ENCODE measurements at regions of chr16 and their contacts with region 1.

Region 1: DNA sequence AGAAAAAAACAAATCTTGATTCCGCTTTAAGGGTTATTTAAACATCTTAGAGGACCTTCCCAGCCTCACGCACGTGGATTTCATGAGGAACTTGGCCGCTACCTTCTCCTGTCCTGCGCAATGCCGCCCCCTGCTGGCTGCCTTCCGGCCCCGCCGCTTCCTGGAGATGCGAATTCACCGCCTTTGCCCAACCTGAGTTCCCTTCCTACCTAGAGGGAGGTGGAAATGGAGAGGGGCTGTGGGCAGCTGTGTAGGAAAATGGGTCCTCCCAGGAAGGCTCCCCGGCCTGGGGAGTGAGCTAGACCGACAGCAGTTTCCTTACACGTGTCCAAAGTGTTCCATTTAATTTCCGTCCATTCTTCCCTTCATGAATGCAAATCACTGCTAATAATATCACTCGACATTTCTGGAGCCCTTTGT is 1.0 kb upstream of the ABCC12 start:
- DNase-seq: peak; percentile 93
- ATAC-seq: peak; percentile 50
- H3K4me3 Mint-ChIP-seq: no peak overlapping the region
- H3K27ac Mint-ChIP-seq: no peak overlapping the region
- H3K4me1 Mint-ChIP-seq: peaks cover 25% of the 10 kb centered on the region
- H3K27me3 Mint-ChIP-seq: peaks cover 30% of the 10 kb centered on the region

Region 2: GRCh38 chr16:47018223-47018891 is 1138.4 kb before region 1 on chr16:
- CTCF ChIA-PET with region 1: no interaction called
- POLR2A ChIA-PET with region 1: no interaction called
- intact Hi-C with region 1: loop called in 1 of 2 experiments (anchors 1 kb)
- DNase-seq: peak; percentile 76
- ATAC-seq: peak; percentile 95
- H3K4me3 Mint-ChIP-seq: no peak overlapping the region
- H3K27ac Mint-ChIP-seq: peak overlapping the region; percentile 60
- H3K4me1 Mint-ChIP-seq: peaks cover 18% of the 10 kb centered on the region
- H3K27me3 Mint-ChIP-seq: no peaks in the 10 kb centered on the region

Region 3: GRCh38 chr16:47110939-47111338 is 1045.9 kb before region 1 on chr16:
- CTCF ChIA-PET with region 1: no interaction called
- POLR2A ChIA-PET with region 1: no interaction called
- intact Hi-C with region 1: loop called in 1 of 2 experiments (anchors 1 kb)
- DNase-seq: no peak
- ATAC-seq: no peak
- H3K4me3 Mint-ChIP-seq: no peak overlapping the region
- H3K27ac Mint-ChIP-seq: no peak overlapping the region
- H3K4me1 Mint-ChIP-seq: peaks cover 23% of the 10 kb centered on the region
- H3K27me3 Mint-ChIP-seq: peaks cover 3% of the 10 kb centered on the region

Region 4: GRCh38 chr16:47574091-47575054 is 582.4 kb before region 1 on chr16:
- CTCF ChIA-PET with region 1: no interaction called
- POLR2A ChIA-PET with region 1: no interaction called
- intact Hi-C with region 1: loop called (anchors 10 kb)
- DNase-seq: peak; percentile 66
- ATAC-seq: peak; percentile 87
- H3K4me3 Mint-ChIP-seq: no peak overlapping the region
- H3K27ac Mint-ChIP-seq: peak overlapping the region; percentile 78
- H3K4me1 Mint-ChIP-seq: peaks cover 46% of the 10 kb centered on the region
- H3K27me3 Mint-ChIP-seq: no peaks in the 10 kb centered on the region

Region 5: GRCh38 chr16:48054881-48055601 is 101.8 kb before region 1 on chr16:
- CTCF ChIA-PET with region 1: interaction called, 3 read pairs
- POLR2A ChIA-PET with region 1: no interaction called
- intact Hi-C with region 1: loop called in 1 of 2 experiments (anchors 10 kb)
- DNase-seq: peak; percentile 64
- ATAC-seq: peak; percentile 61
- H3K4me3 Mint-ChIP-seq: no peak overlapping the region
- H3K27ac Mint-ChIP-seq: no peak overlapping the region
- H3K4me1 Mint-ChIP-seq: peaks cover 5% of the 10 kb centered on the region
- H3K27me3 Mint-ChIP-seq: peaks cover 20% of the 10 kb centered on the region

Region 6: DNA sequence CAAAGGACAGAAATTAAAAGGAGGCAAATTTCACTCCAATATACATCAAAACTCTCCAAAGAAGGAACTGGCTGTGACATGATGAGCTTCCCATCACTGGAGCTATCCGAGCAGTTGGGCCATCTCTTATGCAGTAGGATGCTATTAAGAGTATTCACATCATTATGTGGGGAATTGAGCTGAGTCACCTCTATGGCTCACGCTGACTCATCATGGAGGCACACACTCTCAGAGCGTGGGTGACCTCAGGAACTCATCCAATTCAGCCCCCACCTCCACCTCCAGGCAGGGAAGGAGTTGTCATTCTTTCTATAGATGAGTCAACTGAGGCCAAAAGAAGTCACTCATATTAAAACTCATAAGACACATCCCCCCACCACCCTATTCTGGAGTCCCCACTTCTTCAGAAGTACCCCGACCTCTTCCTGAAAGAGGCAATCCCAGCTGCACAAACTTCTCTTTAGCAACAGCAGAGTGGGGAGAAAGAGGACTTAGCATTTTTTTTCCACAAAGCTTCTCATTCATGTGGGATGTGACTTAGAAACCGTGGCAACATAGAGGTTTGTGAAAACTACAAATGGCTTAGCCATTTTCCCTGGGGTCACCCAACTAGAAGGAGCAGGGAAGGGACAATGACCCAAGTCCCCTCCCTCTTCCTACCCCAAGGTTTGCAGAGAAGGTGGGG is 33.6 kb before region 1 on chr16:
- CTCF ChIA-PET with region 1: interaction called, 6 read pairs
- POLR2A ChIA-PET with region 1: no interaction called
- intact Hi-C with region 1: loop called (anchors 1 kb)
- DNase-seq: peak; percentile 82
- ATAC-seq: peak; percentile 93
- H3K4me3 Mint-ChIP-seq: no peak overlapping the region
- H3K27ac Mint-ChIP-seq: no peak overlapping the region
- H3K4me1 Mint-ChIP-seq: peaks cover 20% of the 10 kb centered on the region
- H3K27me3 Mint-ChIP-seq: peaks cover 23% of the 10 kb centered on the region

Region 7: GRCh38 chr16:48632137-48632774 is 475.5 kb after region 1 on chr16:
- CTCF ChIA-PET with region 1: no interaction called
- POLR2A ChIA-PET with region 1: no interaction called
- intact Hi-C with region 1: loop called in 1 of 2 experiments (anchors 5 kb)
- DNase-seq: no peak
- ATAC-seq: no peak
- H3K4me3 Mint-ChIP-seq: no peak overlapping the region
- H3K27ac Mint-ChIP-seq: no peak overlapping the region
- H3K4me1 Mint-ChIP-seq: peaks cover 8% of the 10 kb centered on the region
- H3K27me3 Mint-ChIP-seq: peaks cover 2% of the 10 kb centered on the region

Measured in activated CD4-positive, alpha-beta T cell treated with anti-CD3 and anti-CD28 coated beads for 36 hours (primary cell).